ENCODE measurements at regions of chr22 and their contacts with region 1.

Region 1: GRCh38 chr22:22753526-22754267 is 109.3 kb downstream of the GGTLC2 start:
- DNase-seq: peak; percentile 86
- ATAC-seq: peak; percentile 97
- H3K4me3 Mint-ChIP-seq: no peak overlapping the region
- H3K27ac Mint-ChIP-seq: no peak overlapping the region
- H3K4me1 Mint-ChIP-seq: peaks cover 34% of the 10 kb centered on the region
- H3K27me3 Mint-ChIP-seq: peaks cover 6% of the 10 kb centered on the region

Region 2: DNA sequence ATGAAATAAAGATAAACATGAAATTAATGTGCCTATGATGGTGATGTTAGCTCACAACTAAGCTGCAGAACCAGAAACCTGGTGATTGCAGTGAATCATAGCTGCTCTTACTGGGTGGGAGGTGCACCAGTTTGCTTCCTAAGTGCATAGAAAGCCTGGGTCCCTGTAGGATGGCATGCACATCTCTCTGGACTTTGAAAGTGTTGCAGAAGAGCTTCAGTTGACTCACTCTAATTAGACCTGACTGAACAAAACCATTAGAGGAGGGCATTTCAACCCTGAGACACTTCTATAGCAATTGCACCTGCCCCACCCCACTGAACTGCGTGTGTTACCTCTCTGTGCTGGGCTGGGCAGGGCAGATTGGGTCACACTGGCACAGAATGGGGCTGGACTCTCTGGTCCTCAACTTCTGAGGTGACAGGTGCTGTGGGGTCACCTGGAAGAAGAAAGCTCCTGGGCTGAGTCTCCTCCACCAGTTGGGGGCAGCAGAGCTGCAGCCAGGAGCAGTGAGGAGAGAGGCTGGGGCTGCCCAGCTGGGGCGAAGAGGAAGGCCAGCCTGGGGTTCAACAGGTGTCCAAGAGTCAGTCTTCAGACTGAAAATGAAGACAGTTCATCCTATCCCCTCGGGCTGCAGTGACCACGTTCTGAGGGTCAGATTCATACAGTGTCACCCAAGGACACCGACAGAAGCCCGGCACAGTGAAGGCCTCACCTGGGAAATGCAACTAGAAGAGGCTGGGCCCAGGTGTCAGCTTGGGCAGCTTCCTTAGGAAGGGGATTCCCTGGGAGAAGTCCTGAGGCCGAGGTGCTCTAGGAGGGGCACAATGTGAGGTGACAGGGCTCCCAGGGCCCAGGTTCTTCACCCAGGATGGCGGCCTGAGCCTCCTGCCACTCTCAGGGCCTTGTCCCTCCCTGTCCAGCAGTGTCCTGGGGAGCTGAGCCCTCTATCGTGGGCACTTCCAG is 51.2 kb before region 1 on chr22:
- CTCF ChIA-PET with region 1: interaction called, 10 read pairs
- POLR2A ChIA-PET with region 1: no interaction called
- DNase-seq: no peak
- ATAC-seq: no peak
- H3K4me3 Mint-ChIP-seq: no peak overlapping the region
- H3K27ac Mint-ChIP-seq: no peak overlapping the region
- H3K4me1 Mint-ChIP-seq: peaks cover 9% of the 10 kb centered on the region
- H3K27me3 Mint-ChIP-seq: peaks cover 2% of the 10 kb centered on the region

Region 3: GRCh38 chr22:22720201-22720723 is 33.4 kb before region 1 on chr22:
- CTCF ChIA-PET with region 1: interaction called, 13 read pairs
- POLR2A ChIA-PET with region 1: no interaction called
- DNase-seq: peak; percentile 68
- ATAC-seq: peak; percentile 85
- H3K4me3 Mint-ChIP-seq: no peak overlapping the region
- H3K27ac Mint-ChIP-seq: peak overlapping the region; percentile 42
- H3K4me1 Mint-ChIP-seq: peaks cover 30% of the 10 kb centered on the region
- H3K27me3 Mint-ChIP-seq: peaks cover 16% of the 10 kb centered on the region

Region 4: GRCh38 chr22:22776121-22776520 is 22.4 kb after region 1 on chr22:
- CTCF ChIA-PET with region 1: interaction called, 15 read pairs
- POLR2A ChIA-PET with region 1: no interaction called
- DNase-seq: no peak
- ATAC-seq: no peak
- H3K4me3 Mint-ChIP-seq: no peak overlapping the region
- H3K27ac Mint-ChIP-seq: no peak overlapping the region
- H3K4me1 Mint-ChIP-seq: no peaks in the 10 kb centered on the region
- H3K27me3 Mint-ChIP-seq: peaks cover 6% of the 10 kb centered on the region

Region 5: DNA sequence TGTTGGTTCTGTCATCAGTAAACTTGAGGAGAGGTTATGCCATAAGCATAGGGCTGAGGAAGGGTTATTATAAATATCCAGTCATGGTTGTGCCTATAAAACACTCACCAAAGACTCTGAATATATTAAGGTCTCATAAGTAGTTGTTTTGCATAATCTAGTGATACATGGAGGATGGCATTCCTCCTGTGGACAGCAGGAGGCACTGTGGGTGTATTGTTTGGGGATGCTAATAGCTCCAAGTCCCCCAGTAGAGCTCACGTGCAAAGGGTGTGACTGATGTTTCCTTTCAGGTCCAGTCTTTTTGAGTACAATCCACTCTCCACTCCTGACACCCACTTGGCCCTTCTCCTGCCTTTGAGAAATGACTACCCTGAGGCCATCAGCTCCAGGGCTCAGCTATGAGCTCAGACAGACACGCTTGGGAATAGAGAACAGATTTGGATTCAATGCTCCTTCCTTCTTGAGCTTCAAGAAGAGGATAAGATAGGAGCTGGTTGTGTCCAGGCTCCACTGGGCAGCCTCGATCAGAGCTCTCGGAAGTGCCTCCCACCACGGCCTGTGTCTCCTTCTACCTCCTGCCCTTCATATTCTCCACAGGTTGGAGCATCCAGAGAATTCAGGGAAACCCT is 48.8 kb after region 1 on chr22:
- CTCF ChIA-PET with region 1: interaction called, 10 read pairs
- POLR2A ChIA-PET with region 1: no interaction called
- DNase-seq: peak; percentile 71
- ATAC-seq: peak; percentile 73
- H3K4me3 Mint-ChIP-seq: no peak overlapping the region
- H3K27ac Mint-ChIP-seq: no peak overlapping the region
- H3K4me1 Mint-ChIP-seq: peaks cover 2% of the 10 kb centered on the region
- H3K27me3 Mint-ChIP-seq: peaks cover 22% of the 10 kb centered on the region

Region 6: DNA sequence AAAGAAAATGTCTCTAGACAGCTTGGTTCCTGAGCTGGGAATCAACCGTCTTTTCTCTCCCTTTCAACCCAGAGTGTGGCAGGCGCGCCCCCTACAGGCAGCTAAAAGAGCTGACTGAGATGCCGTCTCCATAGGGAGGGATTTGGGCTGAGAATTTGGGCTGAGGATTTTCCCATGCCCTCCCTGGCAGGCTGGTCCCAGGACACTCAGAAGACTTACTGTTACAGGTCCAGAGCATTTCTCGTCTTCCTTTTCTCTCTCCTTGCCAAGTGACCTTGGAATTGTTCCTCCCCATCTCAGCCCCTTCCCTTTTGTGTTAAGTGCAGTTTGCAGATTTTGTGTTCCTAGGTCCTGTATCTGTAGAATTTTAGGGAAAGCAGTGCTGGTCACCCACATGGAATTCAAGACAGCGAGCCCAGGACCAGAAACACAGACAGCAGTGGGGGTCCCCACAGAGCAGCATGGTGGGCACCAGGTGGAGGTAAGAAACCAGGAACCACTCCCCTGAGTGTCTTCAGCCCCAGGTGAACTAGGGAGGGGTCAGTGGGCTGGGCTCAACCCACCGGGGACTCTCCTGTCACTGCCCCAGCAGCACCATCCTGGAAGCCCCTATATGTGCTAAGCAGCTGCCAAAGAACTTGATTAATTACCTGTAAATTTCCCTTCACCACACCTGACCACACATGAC is 124.0 kb after region 1 on chr22:
- CTCF ChIA-PET with region 1: interaction called, 125 read pairs
- POLR2A ChIA-PET with region 1: no interaction called
- DNase-seq: peak; percentile 82
- ATAC-seq: peak; percentile 60
- H3K4me3 Mint-ChIP-seq: no peak overlapping the region
- H3K27ac Mint-ChIP-seq: no peak overlapping the region
- H3K4me1 Mint-ChIP-seq: no peaks in the 10 kb centered on the region
- H3K27me3 Mint-ChIP-seq: peaks cover 21% of the 10 kb centered on the region

Measured in activated CD8-positive, alpha-beta T cell treated with anti-CD3 and anti-CD28 coated beads, Interleukin-2, amount 10 ng/mL, durations not matched to agents 7 days and 5 days (primary cell).